PC-9 (cell line): ENCODE measurements at regions of chr12 and their contacts with region 1.

Region 1: DNA sequence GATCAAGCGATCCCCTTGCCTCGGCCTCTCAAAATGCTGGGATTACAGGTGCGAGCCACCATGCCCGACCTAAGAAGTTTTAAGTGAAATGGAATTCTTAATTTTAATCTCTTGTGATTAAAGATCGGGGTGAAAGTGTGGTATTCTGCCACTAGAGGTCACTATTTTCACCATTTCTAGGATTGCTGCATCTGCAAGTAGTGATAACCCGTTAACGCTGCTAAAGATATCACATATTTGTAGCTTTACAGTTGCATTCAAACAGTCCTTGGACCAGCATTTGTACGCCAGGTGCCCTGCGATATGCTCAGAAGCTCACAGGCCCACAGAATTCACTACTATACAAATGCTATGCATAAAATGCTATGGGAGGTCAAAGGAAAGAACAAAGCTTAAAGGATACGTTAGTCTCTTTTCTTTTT is 19.3 kb downstream of the CCDC62 start:
- DNase-seq: peak in 1 of 2 experiments; percentile 6
- H3K4me3 ChIP-seq: no peak overlapping the region
- H3K27ac ChIP-seq: no peak overlapping the region
- H3K4me1 ChIP-seq: no peaks in the 10 kb centered on the region
- H3K27me3 ChIP-seq: no peaks in the 10 kb centered on the region
- CTCF ChIP-seq: peak; percentile 86

Region 2: DNA sequence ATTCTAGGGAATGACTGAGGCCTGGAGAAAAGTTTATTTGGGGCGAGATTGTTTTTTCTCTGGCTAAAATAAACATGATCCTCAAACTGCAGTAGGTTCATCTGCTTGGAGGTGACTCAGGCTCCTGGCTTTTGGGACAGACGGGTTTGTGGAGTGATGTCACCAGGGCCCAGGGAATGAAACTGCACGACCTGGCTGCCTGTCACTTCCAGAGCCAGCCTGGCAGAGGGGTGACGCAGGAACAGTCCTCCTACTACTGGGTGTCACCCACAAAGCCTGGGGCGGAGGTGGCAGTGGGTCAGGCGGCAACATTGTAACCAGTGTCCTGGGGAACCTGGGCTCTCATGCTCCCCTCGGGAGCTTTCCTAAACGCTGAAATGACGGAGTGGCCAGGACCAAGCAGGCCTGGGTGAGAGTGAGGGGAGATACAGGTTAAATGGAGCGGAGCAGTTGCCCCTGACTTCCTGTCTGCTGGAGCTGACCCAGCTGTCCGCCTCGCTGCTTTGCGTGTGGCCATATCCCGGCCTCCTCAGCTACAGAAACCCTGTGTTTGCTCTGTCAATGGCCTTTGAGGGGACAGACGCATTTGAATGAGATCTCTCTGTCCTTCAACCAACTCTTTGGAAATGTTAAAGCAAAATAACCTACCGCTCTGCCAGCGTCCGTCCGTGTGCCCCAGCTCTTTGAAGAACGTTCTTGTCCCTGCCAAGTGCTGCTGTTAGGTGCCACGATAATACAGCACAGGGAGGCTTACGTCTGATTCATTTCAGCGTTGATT is 48.0 kb after region 1 on chr12:
- CTCF ChIA-PET with region 1: no interaction called
- POLR2A ChIA-PET with region 1: no interaction called
- intact Hi-C with region 1: loop called (anchors 5 kb)
- DNase-seq: peak; percentile 80 to 81
- H3K4me3 ChIP-seq: no peak overlapping the region
- H3K27ac ChIP-seq: peak overlapping the region; percentile 58
- H3K4me1 ChIP-seq: peaks cover 51% of the 10 kb centered on the region
- H3K27me3 ChIP-seq: no peaks in the 10 kb centered on the region
- CTCF ChIP-seq: no peak

Region 3: DNA sequence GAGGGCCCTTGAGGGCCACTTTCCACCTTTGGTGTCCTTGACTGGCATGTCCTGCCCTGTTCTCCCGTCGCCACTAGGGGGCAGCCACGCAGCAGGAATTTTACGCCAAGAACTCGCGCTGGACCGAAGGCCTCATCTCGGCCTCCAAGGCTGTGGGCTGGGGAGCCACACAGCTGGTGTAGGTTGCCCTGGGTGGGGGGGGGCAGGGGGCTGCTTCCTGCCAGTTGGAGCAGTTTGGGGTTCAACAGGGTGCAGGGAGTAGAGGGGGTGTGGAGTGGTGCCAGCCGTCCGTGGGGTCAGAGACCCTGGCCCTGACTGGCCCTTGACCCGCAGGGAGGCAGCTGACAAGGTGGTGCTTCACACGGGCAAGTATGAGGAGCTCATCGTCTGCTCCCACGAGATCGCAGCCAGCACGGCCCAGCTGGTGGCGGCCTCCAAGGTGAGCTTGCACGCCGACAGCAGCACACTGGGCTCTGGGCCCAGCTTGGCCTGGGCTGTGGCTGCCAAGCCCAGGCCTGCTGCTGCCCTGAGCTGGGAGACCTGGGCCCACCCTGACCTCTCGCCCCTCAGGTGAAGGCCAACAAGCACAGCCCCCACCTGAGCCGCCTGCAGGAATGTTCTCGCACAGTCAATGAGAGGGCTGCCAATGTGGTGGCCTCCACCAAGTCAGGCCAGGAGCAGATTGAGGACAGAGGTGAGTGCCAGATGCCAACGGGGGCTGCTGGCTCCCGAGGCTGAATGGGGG is 66.8 kb after region 1 on chr12:
- CTCF ChIA-PET with region 1: interaction called, 4 read pairs
- POLR2A ChIA-PET with region 1: no interaction called
- intact Hi-C with region 1: loop called (anchors 5 kb)
- DNase-seq: peak in 1 of 2 experiments; percentile 77
- H3K4me3 ChIP-seq: no peak overlapping the region
- H3K27ac ChIP-seq: no peak overlapping the region
- H3K4me1 ChIP-seq: no peaks in the 10 kb centered on the region
- H3K27me3 ChIP-seq: no peaks in the 10 kb centered on the region
- CTCF ChIP-seq: peak; percentile 93